ENCODE measurements at regions of chr2 and their contacts with region 1.

Region 1: GRCh38 chr2:85318222-85319074 is 9.3 kb downstream of the TGOLN2 start:
- DNase-seq: no peak
- H3K4me3 ChIP-seq: no peak overlapping the region
- H3K27ac ChIP-seq: no peak overlapping the region
- H3K4me1 ChIP-seq: peaks cover 2% of the 10 kb centered on the region
- H3K27me3 ChIP-seq: no peaks in the 10 kb centered on the region
- CTCF ChIP-seq: no peak
- EP300 ChIP-seq: no peak
- POLR2A ChIP-seq: no peak

Region 2: DNA sequence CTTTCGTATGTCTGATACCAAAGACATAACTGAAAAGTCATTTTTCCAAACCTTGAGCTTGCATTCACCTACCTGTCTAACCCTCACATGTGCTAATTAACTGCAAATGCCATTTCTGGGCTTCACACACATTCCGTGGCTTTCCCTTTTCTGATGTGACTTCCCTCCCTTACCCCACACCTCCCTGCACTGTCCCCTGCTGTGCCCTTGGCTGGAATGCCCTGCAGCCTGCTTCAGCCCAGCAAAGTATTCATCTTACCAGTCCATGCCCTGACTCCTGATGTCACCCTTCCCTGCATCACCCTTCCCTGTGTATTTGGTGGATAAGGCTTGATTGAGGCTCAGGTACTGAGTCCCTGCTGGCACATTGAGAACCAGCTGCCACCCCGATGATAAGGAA is 23.7 kb after region 1 on chr2:
- intact Hi-C with region 1: loop called in 1 of 4 experiments (anchors 2 kb)
- DNase-seq: no peak
- H3K4me3 ChIP-seq: no peak overlapping the region
- H3K27ac ChIP-seq: no peak overlapping the region
- H3K4me1 ChIP-seq: no peaks in the 10 kb centered on the region
- H3K27me3 ChIP-seq: no peaks in the 10 kb centered on the region
- CTCF ChIP-seq: no peak
- EP300 ChIP-seq: no peak
- POLR2A ChIP-seq: no peak

Measured in ovary (tissue), 10 donors.